Right ventricle myocardium inferior (tissue), 1 donor: ENCODE measurements at regions of chr5 and their contacts with region 1.

Region 1: DNA sequence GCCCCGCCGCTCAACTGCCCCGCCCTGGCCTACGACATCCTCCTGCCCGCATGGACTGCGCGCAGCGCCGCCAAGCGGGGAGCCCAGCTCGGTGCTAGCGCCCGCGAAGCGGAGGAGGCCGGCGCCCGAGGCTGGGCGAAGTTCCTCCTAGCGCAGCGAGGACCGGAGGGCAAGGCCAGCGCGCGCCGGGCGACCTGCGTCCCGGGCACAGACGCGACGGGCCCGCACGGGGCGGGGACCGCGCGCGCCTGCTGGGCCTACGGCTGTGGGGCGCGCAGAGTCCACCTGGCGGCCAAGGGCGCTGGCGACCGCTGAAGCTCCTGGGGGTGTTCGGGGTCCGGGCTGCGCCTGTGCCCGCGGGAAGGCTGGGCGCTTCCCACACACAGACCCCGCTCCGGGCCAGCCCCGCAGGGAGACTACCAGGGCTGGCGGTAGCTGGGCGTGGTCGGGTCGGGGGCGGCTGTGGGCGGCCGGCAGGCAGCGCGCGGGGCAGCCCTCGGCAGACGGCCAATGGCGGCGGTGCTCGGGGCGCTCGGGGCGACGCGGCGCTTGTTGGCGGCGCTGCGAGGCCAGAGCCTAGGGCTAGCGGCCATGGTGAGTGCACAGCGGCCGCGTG is at the start of gene PCBD2:
- DNase-seq: peak; percentile 97
- ATAC-seq: peak; percentile 95
- total RNA-seq, gene PCBD2: 24.7 TPM

Region 2: DNA sequence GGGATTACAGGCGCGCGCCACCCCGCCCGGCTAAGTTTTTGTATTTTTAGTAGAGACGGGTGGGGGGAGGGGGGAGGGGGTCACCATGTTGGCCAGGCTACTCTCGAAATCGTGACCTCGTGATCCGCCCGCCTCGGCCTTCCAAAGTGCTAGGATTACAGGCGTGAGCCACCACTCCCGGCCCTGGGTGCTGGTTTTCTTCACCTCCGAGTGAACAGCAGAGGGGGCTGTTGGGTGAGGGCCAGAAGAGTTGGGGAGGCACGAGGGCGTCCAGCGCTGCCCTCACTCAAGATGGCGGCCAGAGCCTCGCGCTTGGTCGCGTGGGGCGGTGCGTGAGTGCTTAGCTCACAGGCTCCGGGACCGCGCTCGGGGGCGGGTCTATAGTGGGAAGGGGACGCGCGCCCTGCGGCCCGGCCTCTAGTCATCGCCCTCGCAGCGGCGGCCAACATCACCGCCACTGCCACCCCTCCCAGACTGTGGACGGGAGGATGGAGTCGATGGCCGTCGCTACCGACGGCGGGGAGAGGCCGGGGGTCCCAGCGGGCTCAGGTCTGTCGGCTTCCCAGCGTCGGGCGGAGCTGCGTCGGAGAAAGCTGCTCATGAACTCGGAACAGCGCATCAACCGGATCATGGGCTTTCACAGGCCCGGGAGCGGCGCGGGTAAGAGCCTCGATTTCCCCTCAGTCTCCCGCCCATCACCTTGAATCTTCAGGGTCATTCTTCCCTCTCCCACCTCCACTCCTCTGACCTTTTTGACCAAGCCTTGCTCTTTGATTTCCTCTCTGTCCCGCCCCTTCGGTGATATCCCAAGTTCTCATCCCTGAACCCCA is 166.4 kb before region 1 on chr5 and contains the start of gene CAMLG:
- intact Hi-C with region 1: loop called (anchors 1 kb)
- DNase-seq: peak; percentile 100
- ATAC-seq: peak; percentile 100
- total RNA-seq, gene CAMLG: 14.5 TPM

Region 3: GRCh38 chr5:134758504-134759341 is 146.0 kb before region 1 on chr5 and contains the start of gene DDX46:
- intact Hi-C with region 1: loop called (anchors 5 kb)
- DNase-seq: peak; percentile 97
- ATAC-seq: peak; percentile 99
- total RNA-seq, gene DDX46: 27.6 TPM

Region 4: DNA sequence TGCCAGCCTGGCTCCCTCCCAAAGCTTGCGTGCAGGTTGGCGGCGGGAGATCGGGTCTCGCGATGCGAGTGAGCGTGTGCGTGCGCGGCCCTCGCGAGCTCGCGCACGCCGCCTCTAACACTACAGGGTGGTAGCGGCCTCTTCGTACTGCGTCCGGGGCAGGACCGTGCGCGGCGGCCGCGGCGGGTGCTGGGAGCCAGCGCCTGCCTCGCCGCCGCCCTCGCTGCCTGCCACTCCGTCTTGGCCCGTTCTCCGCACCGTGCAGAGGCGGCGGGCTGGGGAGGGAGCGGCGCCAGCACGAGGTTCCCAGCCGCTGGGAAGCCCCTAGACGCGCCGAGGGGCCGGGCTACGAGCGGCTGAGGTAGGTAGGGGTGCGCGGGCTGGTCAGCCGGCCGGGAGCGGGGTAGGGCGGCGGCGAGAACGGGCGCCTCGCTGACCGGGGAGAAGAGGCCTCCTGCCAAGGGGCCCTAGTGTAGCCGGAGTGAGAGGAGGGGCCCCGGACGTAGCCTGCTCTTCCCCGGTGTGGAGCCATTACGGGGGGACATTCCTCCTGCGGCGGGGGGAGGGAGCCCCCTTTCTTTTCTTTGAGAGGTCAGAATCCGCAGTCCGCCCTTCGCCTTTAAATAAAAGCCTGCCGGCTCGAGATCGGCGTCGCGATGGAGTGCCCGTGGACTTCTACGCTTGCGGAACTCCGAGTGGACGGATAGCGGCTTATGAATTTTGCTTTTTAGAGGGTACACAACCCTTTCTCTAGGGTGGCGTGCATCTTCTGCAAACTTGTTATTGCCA is 58.7 kb before region 1 on chr5 and contains the start of gene C5orf24:
- intact Hi-C with region 1: loop called (anchors 5 kb)
- DNase-seq: peak; percentile 98
- ATAC-seq: peak; percentile 99
- total RNA-seq, gene C5orf24: 21.9 TPM

Region 5: DNA sequence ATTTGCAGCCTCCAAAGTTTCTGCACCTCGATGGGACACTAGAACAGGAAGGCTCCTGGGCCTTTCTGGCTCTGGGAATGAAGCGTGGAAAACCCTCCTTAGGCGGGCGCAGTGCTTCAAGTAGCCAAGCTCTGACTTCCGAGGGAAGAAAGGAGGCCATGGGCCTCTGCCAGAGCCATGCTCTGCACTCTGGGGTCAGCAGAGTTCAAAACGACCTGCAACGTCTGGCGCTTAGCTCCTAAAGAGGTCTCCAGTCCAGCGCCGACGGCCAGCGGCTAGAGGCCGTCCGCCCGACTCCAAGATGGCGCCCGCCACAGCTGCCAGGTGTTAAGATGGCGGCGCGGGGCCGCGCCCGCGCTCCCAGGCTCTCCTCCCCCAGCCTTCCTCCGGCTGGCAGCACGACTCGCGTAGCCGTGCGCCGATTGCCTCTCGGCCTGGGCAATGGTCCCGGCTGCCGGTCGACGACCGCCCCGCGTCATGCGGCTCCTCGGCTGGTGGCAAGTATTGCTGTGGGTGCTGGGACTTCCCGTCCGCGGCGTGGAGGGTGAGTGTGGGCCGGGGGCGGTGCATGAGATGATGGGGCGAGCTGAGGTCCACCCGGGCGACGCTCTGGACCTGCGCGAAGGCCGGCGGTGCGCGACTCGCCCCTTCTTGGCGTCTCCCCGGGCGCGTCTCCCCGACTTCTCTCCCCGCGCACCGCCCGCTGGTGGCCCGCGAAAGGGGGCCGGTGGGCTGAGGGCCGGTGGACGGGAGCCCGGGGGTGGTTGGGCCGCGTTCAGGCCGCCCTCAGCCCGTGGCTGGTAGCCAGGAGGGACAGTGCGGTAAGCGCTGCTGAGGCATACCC is 30.5 kb before region 1 on chr5 and contains the start of gene TXNDC15:
- intact Hi-C with region 1: loop called (anchors 2 kb)
- DNase-seq: peak; percentile 97
- ATAC-seq: peak; percentile 96
- total RNA-seq, gene TXNDC15: 52.8 TPM

Region 6: GRCh38 chr5:134935711-134936602 is 31.2 kb after region 1 on chr5:
- intact Hi-C with region 1: no loop called
- DNase-seq: no peak
- ATAC-seq: no peak

Region 7: DNA sequence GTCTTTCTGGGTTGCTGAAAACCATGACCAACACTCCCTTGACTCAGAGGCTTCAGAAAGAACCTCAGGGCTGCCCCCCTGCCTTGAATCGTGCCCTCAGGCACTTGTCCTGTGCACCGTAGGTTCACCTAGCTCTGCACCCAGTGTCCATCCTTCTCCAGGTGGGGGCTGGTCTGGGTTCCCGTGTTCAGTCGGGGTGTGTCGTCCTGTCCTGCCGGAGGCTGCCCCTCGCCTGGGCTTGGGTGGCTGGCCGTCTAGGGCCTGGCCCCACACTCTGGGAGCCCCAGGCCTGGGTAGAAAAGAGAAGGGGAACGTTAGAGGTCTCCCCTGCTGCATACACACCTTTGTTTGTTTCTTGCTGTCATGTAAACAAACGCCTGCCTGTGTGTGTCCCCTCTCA is 92.3 kb after region 1 on chr5:
- intact Hi-C with region 1: no loop called
- DNase-seq: no peak
- ATAC-seq: no peak

Region 8: GRCh38 chr5:135332519-135333150 is 427.9 kb after region 1 on chr5:
- intact Hi-C with region 1: loop called (anchors 10 kb)
- DNase-seq: no peak
- ATAC-seq: no peak